Kidney (tissue), 22 donors: ENCODE measurements at regions of chr17 and their contacts with region 1.

Region 1: GRCh38 chr17:82170412-82170961 is 42.2 kb downstream of the CCDC57 start:
- DNase-seq: no peak
- H3K4me3 ChIP-seq: no peak overlapping the region
- H3K27ac ChIP-seq: no peak overlapping the region
- H3K4me1 ChIP-seq: no peaks in the 10 kb centered on the region
- H3K27me3 ChIP-seq: no peaks in the 10 kb centered on the region
- CTCF ChIP-seq: no peak

Region 2: GRCh38 chr17:82110298-82110697 is 60.2 kb before region 1 on chr17:
- intact Hi-C with region 1: loop called (anchors 10 kb)
- DNase-seq: peak in 1 of 5 donors; percentile 35
- H3K4me3 ChIP-seq: no peak overlapping the region
- H3K27ac ChIP-seq: no peak overlapping the region
- H3K4me1 ChIP-seq: peaks cover 0 to 22% (median 13%) of the 10 kb centered on the region in 3 donors
- H3K27me3 ChIP-seq: no peaks in the 10 kb centered on the region
- CTCF ChIP-seq: no peak

Region 3: GRCh38 chr17:82216301-82217119 is 46.0 kb after region 1 on chr17:
- intact Hi-C with region 1: no loop called
- DNase-seq: peak in 3 of 5 donors; percentile 36 to 96 (median 53)
- H3K4me3 ChIP-seq: no peak overlapping the region
- H3K27ac ChIP-seq: peak overlapping the region; percentile 90 to 94
- H3K4me1 ChIP-seq: peaks cover 0 to 29% (median 5%) of the 10 kb centered on the region in 3 donors
- H3K27me3 ChIP-seq: no peaks in the 10 kb centered on the region
- CTCF ChIP-seq: no peak

Region 4: GRCh38 chr17:82228842-82229697 is 58.6 kb after region 1 on chr17 and contains the start of gene SLC16A3:
- intact Hi-C with region 1: no loop called
- DNase-seq: peak; percentile 67 to 94 (median 80)
- H3K4me3 ChIP-seq: peak within 1 kb of the TSS in 2 of 3 donors; percentile 45 to 48
- H3K27ac ChIP-seq: peak within 1 kb of the TSS; percentile 84 to 86
- H3K4me1 ChIP-seq: peaks cover 0 to 25% (median 4%) of the 10 kb centered on the region in 3 donors
- H3K27me3 ChIP-seq: no peaks in the 10 kb centered on the region
- CTCF ChIP-seq: no peak
- total RNA-seq, gene SLC16A3: 85.7 TPM